Psoas muscle (tissue), 8 donors: ENCODE measurements at regions of chr2 and their contacts with region 1.

Region 1: DNA sequence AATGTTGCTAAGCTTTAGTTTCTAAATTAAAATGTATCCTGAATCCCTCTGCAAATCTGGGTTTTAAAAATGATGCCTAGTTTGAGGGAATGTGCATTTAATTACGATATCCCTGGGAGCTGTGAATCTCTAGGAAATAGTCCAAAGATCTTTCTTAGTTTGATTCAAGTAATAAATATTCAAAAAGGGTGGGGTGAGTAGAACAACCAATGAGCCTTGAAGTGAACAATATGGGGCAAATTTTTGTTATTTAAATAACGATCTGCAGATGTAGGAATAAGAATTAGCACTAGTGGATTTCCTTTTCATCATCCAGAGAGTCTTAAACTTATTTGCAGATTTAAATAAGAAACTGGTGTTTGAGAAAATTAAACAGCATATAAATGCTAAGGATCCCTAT is 106.3 kb downstream of the ACVR1 start:
- DNase-seq: no peak
- ATAC-seq: no peak
- H3K4me3 ChIP-seq: no peak overlapping the region
- H3K27ac ChIP-seq: no peak overlapping the region
- H3K4me1 ChIP-seq: no peaks in the 10 kb centered on the region
- H3K27me3 ChIP-seq: no peaks in the 10 kb centered on the region
- CTCF ChIP-seq: no peak

Region 2: GRCh38 chr2:157492189-157492773 is 277.6 kb before region 1 on chr2:
- intact Hi-C with region 1: loop called in 1 of 2 experiments (anchors 5 kb)
- DNase-seq: peak; percentile 44 to 69
- ATAC-seq: peak; percentile 71 to 91 (median 84)
- H3K4me3 ChIP-seq: no peak overlapping the region
- H3K27ac ChIP-seq: no peak overlapping the region
- H3K4me1 ChIP-seq: no peaks in the 10 kb centered on the region
- H3K27me3 ChIP-seq: no peaks in the 10 kb centered on the region
- CTCF ChIP-seq: peak; percentile 64

Region 3: DNA sequence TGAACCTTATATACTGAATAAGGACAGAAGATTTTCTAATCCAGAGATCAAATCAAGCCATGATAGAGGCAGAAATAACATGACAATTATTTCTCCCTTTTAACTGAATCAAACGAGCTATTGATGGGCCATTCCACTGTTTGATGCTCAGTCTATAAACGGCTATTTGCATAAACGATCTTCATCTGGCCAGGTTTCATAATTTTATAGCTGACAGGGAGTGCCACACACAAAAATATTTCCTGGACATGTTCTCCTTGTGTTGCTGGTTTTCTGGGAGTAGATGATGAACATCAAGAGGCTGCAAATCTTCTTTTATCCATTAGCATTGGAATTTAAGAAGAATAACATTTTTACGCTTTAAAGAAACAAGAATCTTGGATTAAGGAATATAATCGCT is 204.3 kb before region 1 on chr2:
- intact Hi-C with region 1: no loop called
- DNase-seq: no peak
- ATAC-seq: no peak
- H3K4me3 ChIP-seq: no peak overlapping the region
- H3K27ac ChIP-seq: no peak overlapping the region
- H3K4me1 ChIP-seq: no peaks in the 10 kb centered on the region
- H3K27me3 ChIP-seq: no peaks in the 10 kb centered on the region
- CTCF ChIP-seq: no peak